Heart right ventricle (tissue), 16 donors: ENCODE measurements at regions of chr11 and their contacts with region 1.

Region 1: GRCh38 chr11:62514151-62514550 is 32.5 kb downstream of the AHNAK start:
- DNase-seq: no peak
- ATAC-seq: peak in 2 of 8 donors; percentile 18
- H3K4me3 ChIP-seq: no peak overlapping the region
- H3K27ac ChIP-seq: no peak overlapping the region
- H3K4me1 ChIP-seq: peaks cover 0 to 36% (median 12%) of the 10 kb centered on the region in 9 donors
- H3K27me3 ChIP-seq: no peaks in the 10 kb centered on the region
- CTCF ChIP-seq: no peak

Region 2: DNA sequence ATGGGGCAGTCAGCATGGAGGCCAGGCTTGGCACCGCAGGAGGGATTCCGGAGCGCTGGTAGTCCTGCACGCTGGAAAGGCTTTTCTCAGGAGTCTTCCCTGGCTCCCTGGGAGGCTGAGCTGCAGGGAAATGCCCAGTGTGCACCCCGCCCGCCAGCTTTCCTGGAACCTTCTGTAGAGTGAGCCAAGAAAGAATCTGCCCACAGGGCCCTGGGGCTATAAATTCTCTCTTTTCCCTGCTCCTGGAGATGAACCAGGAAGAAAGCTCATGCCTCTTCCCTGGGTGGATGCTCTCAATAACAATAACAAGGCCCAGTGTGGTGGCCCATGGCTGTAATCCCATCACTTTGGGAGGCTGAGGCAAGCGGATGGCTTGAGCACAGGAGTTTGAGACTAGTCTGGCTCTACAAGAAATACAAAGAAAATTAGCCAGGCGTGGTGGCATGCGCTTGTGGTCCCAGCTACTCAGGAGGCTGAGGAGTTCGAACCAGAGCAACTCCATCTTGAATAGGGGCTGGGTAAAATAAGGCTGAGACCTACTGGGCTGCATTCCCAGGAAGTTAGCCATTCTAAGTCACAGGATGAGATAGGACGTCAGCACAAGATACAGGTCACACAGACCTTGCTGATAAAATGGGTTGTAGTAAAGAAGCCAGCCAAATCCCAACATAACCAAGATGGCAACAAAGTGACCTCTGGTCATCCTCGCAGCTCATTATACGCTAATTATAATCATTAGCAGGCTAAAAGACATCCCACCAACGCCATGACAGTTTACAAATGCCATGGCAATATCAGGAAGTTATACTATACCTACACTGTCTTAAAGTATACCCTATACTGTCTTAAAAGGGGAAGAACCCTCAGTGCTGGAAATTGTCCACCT is 500.3 kb before region 1 on chr11:
- intact Hi-C with region 1: loop called in 1 of 10 experiments (anchors 10 kb)
- DNase-seq: no peak
- ATAC-seq: peak in 1 of 8 donors; percentile 42
- H3K4me3 ChIP-seq: no peak overlapping the region
- H3K27ac ChIP-seq: no peak overlapping the region
- H3K4me1 ChIP-seq: peaks cover 0 to 23% (median 0%) of the 10 kb centered on the region in 9 donors
- H3K27me3 ChIP-seq: no peaks in the 10 kb centered on the region
- CTCF ChIP-seq: no peak

Region 3: DNA sequence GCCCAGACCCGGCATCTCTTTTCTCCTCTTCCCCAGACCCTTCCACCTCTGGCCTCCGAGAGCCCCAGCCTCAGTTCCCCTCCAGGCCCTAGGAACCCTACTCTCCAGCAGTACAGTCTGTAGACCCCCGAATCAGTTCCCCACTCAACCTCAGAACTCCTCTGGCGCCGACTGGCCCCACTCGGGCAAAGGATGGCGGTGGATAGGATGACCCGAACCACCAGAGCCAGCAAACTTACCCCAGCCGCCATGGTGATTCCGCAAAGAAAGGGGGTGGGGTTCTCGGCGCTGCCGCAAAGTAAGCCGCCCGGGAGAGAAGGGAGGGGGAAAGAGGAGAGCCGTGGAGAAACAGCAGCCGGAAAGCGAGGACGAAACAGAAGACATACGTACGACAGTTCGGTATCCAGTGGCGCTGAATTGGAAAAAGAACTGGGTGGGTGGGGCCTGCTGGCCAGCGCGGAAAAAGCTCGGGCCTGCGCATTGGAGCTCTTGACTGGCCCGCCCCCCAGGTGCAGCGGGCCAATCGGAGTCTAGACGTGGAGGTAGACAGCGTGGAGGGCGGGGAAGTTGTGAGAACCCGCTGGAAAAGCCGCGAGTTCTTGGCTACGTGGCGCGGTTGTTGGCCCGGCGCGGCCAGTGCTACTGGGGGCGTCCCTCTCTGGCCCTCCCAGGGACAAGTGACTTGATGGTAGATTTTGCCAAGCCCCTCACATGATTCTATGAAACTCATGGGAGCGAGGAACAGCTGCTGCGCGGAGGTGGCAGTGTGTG is 59.6 kb after region 1 on chr11 and contains the start of gene EEF1G:
- intact Hi-C with region 1: no loop called
- DNase-seq: peak; percentile 97 to 100
- ATAC-seq: peak; percentile 95 to 97 (median 96)
- H3K4me3 ChIP-seq: peak within 1 kb of the TSS; percentile 71 to 95 (median 85)
- H3K27ac ChIP-seq: peak within 1 kb of the TSS; percentile 81 to 98 (median 92)
- H3K4me1 ChIP-seq: peaks cover 11 to 79% (median 54%) of the 10 kb centered on the region in 9 donors
- H3K27me3 ChIP-seq: no peaks in the 10 kb centered on the region
- CTCF ChIP-seq: no peak
- total RNA-seq, gene EEF1G: 784 to 1,131 (median 1,002) TPM

Region 4: GRCh38 chr11:62999649-63000048 is 485.5 kb after region 1 on chr11:
- intact Hi-C with region 1: loop called in 1 of 10 experiments (anchors 10 kb)
- DNase-seq: no peak
- ATAC-seq: no peak
- H3K4me3 ChIP-seq: no peak overlapping the region
- H3K27ac ChIP-seq: no peak overlapping the region
- H3K4me1 ChIP-seq: no peaks in the 10 kb centered on the region
- H3K27me3 ChIP-seq: peaks cover 0 to 30% (median 0%) of the 10 kb centered on the region in 7 donors
- CTCF ChIP-seq: no peak